Left lung (tissue), 14 donors: ENCODE measurements at regions of chr22 and their contacts with region 1.

Region 1: GRCh38 chr22:34105461-34106062 is 185.3 kb upstream of the LARGE1 start:
- DNase-seq: peak in 2 of 4 donors; percentile 35 to 43
- ATAC-seq: peak; percentile 95
- H3K4me3 ChIP-seq: no peak overlapping the region
- H3K27ac ChIP-seq: no peak overlapping the region
- H3K4me1 ChIP-seq: no peaks in the 10 kb centered on the region
- H3K27me3 ChIP-seq: peaks cover 0 to 19% of the 10 kb centered on the region in 2 donors
- CTCF ChIP-seq: peak; percentile 51

Region 2: GRCh38 chr22:33925194-33925593 is 180.4 kb before region 1 on chr22:
- intact Hi-C with region 1: loop called in 1 of 2 experiments (anchors 5 kb)
- DNase-seq: no peak
- ATAC-seq: no peak
- H3K4me3 ChIP-seq: no peak overlapping the region
- H3K27ac ChIP-seq: no peak overlapping the region
- H3K4me1 ChIP-seq: peaks cover 7 to 18% of the 10 kb centered on the region in 2 donors
- H3K27me3 ChIP-seq: peaks cover 0 to 42% of the 10 kb centered on the region in 2 donors
- CTCF ChIP-seq: no peak

Region 3: GRCh38 chr22:33984656-33985285 is 120.8 kb before region 1 on chr22:
- intact Hi-C with region 1: no loop called
- DNase-seq: peak in 1 of 4 donors; percentile 4
- ATAC-seq: no peak
- H3K4me3 ChIP-seq: no peak overlapping the region
- H3K27ac ChIP-seq: no peak overlapping the region
- H3K4me1 ChIP-seq: no peaks in the 10 kb centered on the region
- H3K27me3 ChIP-seq: no peaks in the 10 kb centered on the region
- CTCF ChIP-seq: no peak

Region 4: DNA sequence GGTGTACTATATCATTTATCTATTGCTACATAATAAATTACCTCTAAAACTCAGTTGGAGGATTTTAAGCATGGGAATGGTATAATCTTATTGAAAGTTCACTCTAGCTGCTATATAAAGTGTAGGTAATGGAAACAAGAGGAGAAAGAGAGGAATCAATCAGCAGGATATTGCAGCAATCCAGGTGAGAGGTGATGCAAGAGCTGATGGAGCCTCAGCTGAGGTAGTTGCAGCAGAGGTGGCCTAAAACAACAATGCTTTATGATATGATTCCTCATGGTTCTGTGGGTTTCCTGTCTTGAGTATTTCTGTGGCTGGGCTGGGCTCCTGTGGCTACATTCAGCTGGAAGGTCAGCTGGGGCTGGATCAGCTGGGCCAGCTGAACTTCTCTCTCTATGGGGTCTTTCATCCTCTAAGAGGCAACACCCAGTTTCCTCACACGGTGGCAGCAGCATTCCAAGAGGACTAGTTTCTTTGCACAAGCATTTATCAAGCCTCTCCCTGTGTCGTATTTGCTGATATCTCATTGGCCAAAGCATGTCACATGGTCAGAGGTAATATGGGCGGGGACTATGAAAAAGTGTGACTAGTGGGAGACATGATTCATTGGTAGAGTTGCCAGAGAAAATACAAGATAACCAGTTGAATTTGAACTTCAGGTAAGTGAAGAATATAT is 49.9 kb before region 1 on chr22:
- intact Hi-C with region 1: no loop called
- DNase-seq: no peak
- ATAC-seq: no peak
- H3K4me3 ChIP-seq: no peak overlapping the region
- H3K27ac ChIP-seq: no peak overlapping the region
- H3K4me1 ChIP-seq: no peaks in the 10 kb centered on the region
- H3K27me3 ChIP-seq: no peaks in the 10 kb centered on the region
- CTCF ChIP-seq: no peak

Region 5: DNA sequence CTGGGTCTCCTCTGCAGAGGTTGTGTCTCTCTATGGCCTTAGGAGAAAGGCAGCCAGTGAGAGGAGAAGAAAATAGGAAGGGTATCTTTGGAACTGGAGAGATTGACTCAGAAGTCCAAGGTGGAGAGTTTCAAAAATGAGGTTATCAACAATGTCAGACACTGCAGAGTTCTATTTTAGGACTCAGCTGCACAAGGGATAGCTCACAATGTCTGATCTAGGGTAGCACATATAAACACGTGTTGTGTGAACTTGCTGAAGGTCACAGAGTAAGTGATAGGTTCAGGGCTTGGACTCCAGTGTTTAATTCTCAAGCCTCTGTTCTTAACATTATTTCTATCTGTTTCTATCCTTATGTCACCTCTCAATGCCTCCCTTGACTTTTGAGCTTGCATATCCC is 119.7 kb after region 1 on chr22:
- intact Hi-C with region 1: no loop called
- DNase-seq: no peak
- ATAC-seq: no peak
- H3K4me3 ChIP-seq: no peak overlapping the region
- H3K27ac ChIP-seq: no peak overlapping the region
- H3K4me1 ChIP-seq: no peaks in the 10 kb centered on the region
- H3K27me3 ChIP-seq: no peaks in the 10 kb centered on the region
- CTCF ChIP-seq: no peak